BJ (cell line): ENCODE measurements at regions of chr9 and their contacts with region 1.

Region 1: GRCh38 chr9:76658535-76659231 is 105.6 kb upstream of the PCA3 start:
- DNase-seq: no peak
- H3K4me3 ChIP-seq: no peak overlapping the region
- H3K27me3 ChIP-seq: peaks cover 1% of the 10 kb centered on the region; the same call in 1 of the 2 replicates
- CTCF ChIP-seq: peak; percentile 62

Region 2: DNA sequence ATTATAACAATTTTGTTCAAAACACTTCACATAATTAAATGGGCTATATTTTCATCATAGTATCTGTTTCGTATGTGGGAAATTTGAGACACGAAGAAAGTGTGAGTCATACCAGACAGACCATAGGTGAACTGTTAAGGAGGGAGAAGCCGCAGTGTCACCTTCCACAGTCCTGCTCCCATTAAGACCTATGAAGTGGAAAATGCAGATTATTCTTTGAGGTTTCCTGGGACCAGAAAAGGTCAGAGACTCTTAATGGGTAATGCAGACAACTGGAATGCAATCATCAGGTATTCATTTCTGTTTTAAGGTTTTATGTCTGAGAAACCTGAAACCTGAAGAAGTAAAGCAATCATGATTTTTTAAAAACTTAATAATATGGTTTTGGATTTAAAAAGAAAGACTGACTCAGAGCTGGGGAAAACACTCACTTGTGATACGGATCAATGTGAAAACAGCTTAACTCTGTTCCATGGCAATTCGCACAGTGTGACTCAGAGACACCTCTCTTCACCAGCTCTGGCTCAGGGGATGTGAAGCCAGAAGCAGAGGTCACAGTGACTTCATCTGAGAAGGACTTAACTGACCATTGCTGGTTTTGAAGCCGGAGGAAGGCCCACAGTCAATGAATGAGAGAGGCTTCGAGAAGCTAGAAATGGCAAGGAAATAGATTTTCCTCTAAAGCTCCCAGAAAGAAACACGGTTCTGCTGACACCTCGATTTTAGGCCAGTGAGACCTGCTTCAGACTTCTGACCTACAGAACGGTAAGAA is 216.9 kb before region 1 on chr9:
- CTCF ChIA-PET with region 1: interaction called, 75 read pairs
- POLR2A ChIA-PET with region 1: no interaction called
- DNase-seq: no peak
- H3K4me3 ChIP-seq: no peak overlapping the region
- H3K27me3 ChIP-seq: peaks cover 1% of the 10 kb centered on the region; the same call in 1 of the 2 replicates
- CTCF ChIP-seq: no peak

Region 3: GRCh38 chr9:76451234-76451633 is 207.4 kb before region 1 on chr9:
- CTCF ChIA-PET with region 1: interaction called, 75 read pairs
- POLR2A ChIA-PET with region 1: no interaction called
- DNase-seq: peak; percentile 33
- H3K4me3 ChIP-seq: no peak overlapping the region
- H3K27me3 ChIP-seq: no peaks in the 10 kb centered on the region
- CTCF ChIP-seq: no peak

Region 4: GRCh38 chr9:76458903-76459690 is 199.6 kb before region 1 on chr9 and contains the start of gene GCNT1:
- CTCF ChIA-PET with region 1: interaction called, 41 read pairs
- POLR2A ChIA-PET with region 1: no interaction called
- DNase-seq: peak; percentile 32
- H3K4me3 ChIP-seq: peak within 1 kb of the TSS; percentile 66
- H3K27me3 ChIP-seq: no peaks in the 10 kb centered on the region
- CTCF ChIP-seq: peak; percentile 52
- polyA plus RNA-seq, gene GCNT1: 23.0 and 39.3 TPM in 2 replicates